ENCODE measurements at regions of chr6 and their contacts with region 1.

Region 1: DNA sequence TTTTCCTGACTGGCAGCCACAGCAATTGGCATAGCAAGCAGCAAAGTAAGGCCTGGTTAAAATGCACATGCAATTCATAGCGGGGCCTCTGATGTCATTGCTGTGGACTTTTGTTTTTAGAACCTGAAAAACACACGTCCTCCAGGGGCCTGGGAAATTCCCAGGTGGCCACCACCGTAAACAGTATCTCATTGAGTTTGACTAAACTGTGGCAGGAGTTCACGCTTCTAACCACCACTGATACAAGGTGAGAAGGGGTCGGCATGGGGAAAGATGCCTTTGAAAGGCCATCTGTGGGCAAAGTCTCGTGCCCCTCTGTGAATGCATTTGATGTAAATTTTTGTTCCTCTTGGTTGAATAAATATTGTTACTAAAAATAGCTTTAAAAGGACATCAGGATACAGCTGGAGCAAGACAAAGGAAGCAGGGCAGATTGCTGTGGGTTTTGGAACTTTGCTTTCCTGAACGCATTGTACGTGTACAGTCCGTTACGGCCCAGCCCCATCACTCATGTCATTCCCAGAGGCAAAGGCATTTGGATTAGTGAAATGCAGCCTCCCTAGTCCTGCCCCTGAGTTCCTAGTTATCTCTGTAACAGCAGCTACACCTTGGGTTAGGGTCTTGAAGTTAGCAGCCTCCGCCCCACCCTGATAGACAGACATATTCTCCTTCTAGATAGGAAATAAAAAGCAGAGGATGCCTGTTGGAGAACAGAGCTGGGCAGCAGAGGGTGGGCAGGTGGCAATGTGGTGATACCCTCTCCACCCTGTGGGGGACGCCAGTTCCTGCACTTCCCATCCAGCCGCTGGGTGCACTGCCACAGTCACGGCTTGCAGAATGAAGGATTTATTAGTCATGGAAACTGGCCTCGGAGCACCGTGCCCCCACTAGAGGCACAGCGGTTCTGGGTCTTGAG is 80.3 kb downstream of the ZDHHC14 start:
- DNase-seq: peak; percentile 76 to 94 (median 88)
- H3K4me3 ChIP-seq: peak overlapping the region in 2 of 7 experiments; percentile 21 to 36
- H3K27ac ChIP-seq: no peak overlapping the region
- H3K4me1 ChIP-seq: peaks cover 2 to 39% (median 31%) of the 10 kb centered on the region in 4 experiments
- H3K27me3 ChIP-seq: no peaks in the 10 kb centered on the region

Region 2: DNA sequence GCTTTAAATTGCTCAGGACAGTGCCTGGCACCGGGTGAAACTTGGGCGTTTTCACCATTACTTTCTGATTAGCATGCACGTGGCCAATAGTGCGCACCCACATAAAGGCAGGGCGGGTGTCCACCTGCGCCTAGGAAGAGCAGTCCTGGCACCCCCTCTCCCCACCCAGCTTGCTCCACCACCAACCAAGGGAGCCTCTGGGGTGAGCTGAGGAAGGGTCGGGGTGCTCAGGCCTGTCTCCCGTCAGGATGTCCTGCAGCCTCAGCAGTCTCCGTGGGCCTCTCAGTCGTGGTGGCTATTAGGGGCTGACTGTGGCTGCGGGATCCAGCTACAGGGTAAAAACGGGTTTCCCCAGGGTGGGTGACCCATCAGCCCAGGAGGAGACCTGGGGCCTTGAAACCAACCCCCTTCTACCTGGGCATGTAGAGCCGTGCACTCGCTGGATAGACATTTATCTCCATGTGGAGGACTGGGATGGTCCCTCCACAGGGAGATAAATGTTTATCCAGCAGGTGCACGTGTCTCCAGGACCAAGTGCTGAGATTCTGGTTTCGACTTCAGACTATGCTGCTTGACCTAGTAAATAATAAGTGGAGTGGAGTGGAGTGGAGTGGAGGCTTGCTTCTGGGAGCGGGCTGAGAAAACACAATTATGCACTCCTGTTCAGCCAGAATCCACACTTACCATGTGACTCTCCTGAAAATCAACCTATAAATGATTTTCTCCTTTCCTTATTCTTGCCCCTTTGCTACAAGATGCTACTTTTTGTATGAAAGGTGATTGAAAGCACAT is 10.8 kb after region 1 on chr6:
- CTCF ChIA-PET with region 1: interaction called, 22 read pairs
- POLR2A ChIA-PET with region 1: no interaction called
- DNase-seq: no peak
- H3K4me3 ChIP-seq: no peak overlapping the region
- H3K27ac ChIP-seq: no peak overlapping the region
- H3K4me1 ChIP-seq: peaks cover 0 to 11% (median 0%) of the 10 kb centered on the region in 4 experiments
- H3K27me3 ChIP-seq: no peaks in the 10 kb centered on the region

Region 3: GRCh38 chr6:157527471-157527907 is 66.2 kb after region 1 on chr6:
- CTCF ChIA-PET with region 1: interaction called, 10 read pairs
- POLR2A ChIA-PET with region 1: no interaction called
- DNase-seq: no peak
- H3K4me3 ChIP-seq: no peak overlapping the region
- H3K27ac ChIP-seq: no peak overlapping the region
- H3K4me1 ChIP-seq: peaks cover 5 to 27% (median 12%) of the 10 kb centered on the region in 4 experiments
- H3K27me3 ChIP-seq: no peaks in the 10 kb centered on the region

Region 4: DNA sequence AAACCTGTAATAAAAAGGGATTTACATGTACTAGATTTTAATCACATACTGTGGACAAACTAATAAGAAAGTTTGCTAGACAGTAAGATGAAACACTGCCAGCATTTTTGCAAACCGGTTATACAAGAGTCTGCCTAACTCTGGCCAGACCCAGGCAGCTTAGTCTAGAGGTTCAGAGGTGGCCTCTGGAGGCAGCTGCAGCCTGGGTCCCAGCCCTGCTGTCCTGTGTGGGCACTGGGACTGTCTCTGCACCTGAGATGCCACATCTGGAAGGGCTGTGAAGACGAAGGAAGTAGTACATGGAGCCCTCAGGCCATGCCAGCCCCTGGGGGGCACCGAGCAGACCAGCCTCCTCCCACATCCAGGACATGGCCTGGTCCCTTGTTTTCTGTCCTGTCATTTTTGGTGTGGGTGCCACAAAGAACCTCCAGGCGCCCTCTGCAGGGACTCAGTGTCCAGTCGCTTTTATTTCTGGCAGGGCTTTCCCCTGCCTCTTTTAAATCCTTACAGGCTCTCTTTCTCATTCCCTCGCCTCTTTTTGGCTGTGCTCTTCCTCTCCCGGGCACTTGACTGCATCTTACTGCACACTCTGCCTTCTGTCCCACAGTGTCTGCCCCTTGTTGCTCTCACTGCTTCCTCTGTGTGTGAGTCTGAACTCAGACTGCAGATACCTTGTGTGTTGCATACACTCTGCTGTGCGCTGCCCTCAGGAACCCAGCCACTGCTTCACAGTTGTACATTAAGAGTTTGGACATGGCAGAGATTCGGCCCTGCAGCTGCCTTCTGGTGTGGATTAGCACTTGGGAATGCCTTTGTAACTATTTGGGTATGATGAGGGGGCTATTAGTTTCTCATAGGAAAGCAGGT is 136.4 kb after region 1 on chr6:
- CTCF ChIA-PET with region 1: interaction called, 15 read pairs
- POLR2A ChIA-PET with region 1: no interaction called
- DNase-seq: peak; percentile 38 to 58 (median 51)
- H3K4me3 ChIP-seq: no peak overlapping the region
- H3K27ac ChIP-seq: no peak overlapping the region
- H3K4me1 ChIP-seq: no peaks in the 10 kb centered on the region
- H3K27me3 ChIP-seq: no peaks in the 10 kb centered on the region

Measured in common myeloid progenitor, CD34-positive (primary cell).